Caco-2 (cell line): ENCODE measurements at regions of chr12 and their contacts with region 1.

Region 1: DNA sequence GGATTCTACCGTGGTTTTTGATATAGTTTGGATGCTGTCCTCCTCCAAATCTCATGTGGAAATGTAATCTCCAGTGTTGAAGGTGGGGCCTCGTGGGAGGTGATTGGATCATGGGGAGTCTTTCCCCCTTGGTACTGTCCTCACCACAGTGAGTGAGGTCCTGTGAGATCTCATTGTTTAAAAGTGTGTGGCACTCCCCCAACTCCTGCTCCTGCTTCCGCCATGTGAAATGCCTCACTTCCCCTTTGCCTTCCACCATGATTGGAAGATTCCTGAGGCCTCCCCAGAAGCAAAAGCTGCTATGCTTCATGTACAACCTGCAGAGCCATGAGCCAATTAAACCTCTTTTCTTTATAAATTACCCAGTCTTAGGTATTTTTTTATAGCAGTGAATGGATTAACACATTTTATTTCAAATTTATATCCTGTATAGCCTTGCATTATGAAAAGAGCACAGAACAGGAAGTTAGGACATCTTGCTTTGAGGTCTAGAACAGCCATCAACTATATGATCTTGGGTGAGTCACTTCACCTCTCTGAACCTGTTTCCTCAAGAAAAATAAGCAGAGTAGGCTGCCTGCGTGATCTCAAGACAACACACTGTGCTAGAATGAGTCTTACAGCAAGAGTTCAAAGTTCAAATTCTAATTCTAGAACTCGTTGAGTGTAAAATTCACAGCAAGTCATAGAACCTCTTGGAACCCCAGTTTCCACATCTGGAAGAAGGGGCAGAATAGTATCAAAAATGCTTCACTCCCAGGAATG is 160.9 kb upstream of the EEA1 start:
- DNase-seq: peak; percentile 37 to 67
- H3K4me3 ChIP-seq: no peak overlapping the region
- H3K4me3 Mint-ChIP-seq: no peak overlapping the region
- H3K27ac Mint-ChIP-seq: peak overlapping the region; percentile 98
- H3K4me1 ChIP-seq: peaks cover 67% of the 10 kb centered on the region
- H3K4me1 Mint-ChIP-seq: peaks cover 54% of the 10 kb centered on the region
- H3K27me3 ChIP-seq: no peaks in the 10 kb centered on the region
- H3K27me3 Mint-ChIP-seq: no peaks in the 10 kb centered on the region
- CTCF ChIP-seq: no peak

Region 2: DNA sequence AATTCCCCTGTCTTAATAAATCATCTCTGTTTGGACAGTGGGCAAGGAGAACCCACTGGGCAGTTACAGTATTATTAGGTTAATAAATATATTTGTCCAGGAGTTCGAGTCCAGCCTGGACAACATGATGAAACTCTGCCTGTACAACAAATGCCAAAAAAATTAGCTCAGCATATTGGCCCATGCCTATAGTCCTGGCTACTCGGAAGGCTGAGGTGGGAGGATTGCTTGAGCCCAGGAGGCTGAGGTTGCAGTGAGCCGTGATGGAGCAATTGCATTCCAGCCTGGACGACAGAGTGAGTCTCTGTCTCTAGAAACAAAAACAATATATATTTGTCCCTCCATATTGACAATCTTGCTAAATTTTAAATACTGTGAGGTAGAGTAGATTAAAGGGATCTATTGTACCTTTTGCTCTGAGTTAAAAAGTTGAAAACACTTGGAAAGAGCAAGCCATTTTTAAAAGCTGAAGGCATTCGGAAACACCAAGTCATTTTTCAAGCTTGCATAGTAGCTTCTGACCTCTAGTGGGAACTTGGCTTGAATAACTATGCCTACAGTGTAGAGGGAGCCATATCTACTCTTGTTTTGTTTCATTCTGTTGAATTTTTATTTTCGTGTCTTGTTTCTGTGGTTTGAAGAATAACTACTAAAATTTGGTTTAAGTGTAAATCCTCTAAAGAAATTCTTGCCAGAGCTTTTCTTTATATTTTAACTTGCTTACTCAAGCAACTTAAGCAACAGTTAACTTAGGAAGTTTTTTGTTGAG is 146.3 kb before region 1 on chr12:
- CTCF ChIA-PET with region 1: no interaction called
- POLR2A ChIA-PET with region 1: interaction called, 4 read pairs
- intact Hi-C with region 1: loop called (anchors 2 kb)
- DNase-seq: no peak
- H3K4me3 ChIP-seq: no peak overlapping the region
- H3K4me3 Mint-ChIP-seq: no peak overlapping the region
- H3K27ac Mint-ChIP-seq: peak overlapping the region; percentile 80
- H3K4me1 ChIP-seq: peaks cover 43% of the 10 kb centered on the region
- H3K4me1 Mint-ChIP-seq: peaks cover 16% of the 10 kb centered on the region
- H3K27me3 ChIP-seq: no peaks in the 10 kb centered on the region
- H3K27me3 Mint-ChIP-seq: no peaks in the 10 kb centered on the region
- CTCF ChIP-seq: peak; percentile 12

Region 3: DNA sequence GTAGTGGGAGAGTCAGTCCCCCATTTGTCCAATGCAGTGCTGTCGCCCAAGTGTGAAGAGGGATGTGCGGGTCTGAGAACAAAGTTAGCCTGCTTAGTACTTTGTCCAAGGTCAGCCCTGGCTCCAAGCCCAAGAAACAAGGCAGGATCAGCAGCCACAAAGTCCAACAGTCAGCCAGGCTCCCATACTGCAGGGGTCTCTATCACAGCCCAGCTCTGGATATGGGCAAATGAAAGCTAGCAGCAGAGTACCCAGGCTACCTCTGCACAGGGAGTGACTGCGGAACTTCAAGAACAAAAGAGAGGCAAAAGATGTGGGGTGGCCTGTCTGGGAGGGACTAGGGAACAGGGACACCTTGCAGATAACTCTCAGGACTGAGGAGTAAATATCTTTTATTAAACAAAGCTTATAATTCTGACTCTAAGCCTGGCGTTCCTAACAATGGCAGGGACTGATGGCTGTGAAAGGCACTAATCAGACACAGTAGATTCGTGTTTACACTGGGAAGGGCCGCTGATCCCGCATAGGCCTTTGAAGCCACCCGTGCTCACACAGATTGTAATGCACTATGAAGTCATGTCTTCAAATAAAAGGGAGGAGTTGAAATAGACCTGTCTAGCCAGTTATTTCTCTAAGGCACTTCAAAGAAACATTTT is 69.9 kb before region 1 on chr12:
- CTCF ChIA-PET with region 1: no interaction called
- POLR2A ChIA-PET with region 1: interaction called, 3 read pairs
- intact Hi-C with region 1: loop called (anchors 1 kb)
- DNase-seq: peak; percentile 92 to 96
- H3K4me3 ChIP-seq: no peak overlapping the region
- H3K4me3 Mint-ChIP-seq: peak overlapping the region; percentile 13
- H3K27ac Mint-ChIP-seq: peak overlapping the region; percentile 89
- H3K4me1 ChIP-seq: peaks cover 89% of the 10 kb centered on the region
- H3K4me1 Mint-ChIP-seq: peaks cover 63% of the 10 kb centered on the region
- H3K27me3 ChIP-seq: no peaks in the 10 kb centered on the region
- H3K27me3 Mint-ChIP-seq: no peaks in the 10 kb centered on the region
- CTCF ChIP-seq: no peak

Region 4: GRCh38 chr12:93103154-93103553 is 13.2 kb after region 1 on chr12:
- CTCF ChIA-PET with region 1: no interaction called
- POLR2A ChIA-PET with region 1: interaction called, 3 read pairs
- intact Hi-C with region 1: loop called (anchors 1 kb)
- DNase-seq: no peak
- H3K4me3 ChIP-seq: no peak overlapping the region
- H3K4me3 Mint-ChIP-seq: no peak overlapping the region
- H3K27ac Mint-ChIP-seq: peak overlapping the region; percentile 76
- H3K4me1 ChIP-seq: peaks cover 47% of the 10 kb centered on the region
- H3K4me1 Mint-ChIP-seq: peaks cover 44% of the 10 kb centered on the region
- H3K27me3 ChIP-seq: no peaks in the 10 kb centered on the region
- H3K27me3 Mint-ChIP-seq: no peaks in the 10 kb centered on the region
- CTCF ChIP-seq: no peak

Region 5: GRCh38 chr12:93127582-93128331 is 37.8 kb after region 1 on chr12:
- CTCF ChIA-PET with region 1: no interaction called
- POLR2A ChIA-PET with region 1: no interaction called
- intact Hi-C with region 1: loop called (anchors 1 kb)
- DNase-seq: peak; percentile 89 to 93
- H3K4me3 ChIP-seq: no peak overlapping the region
- H3K4me3 Mint-ChIP-seq: peak overlapping the region; percentile 37
- H3K27ac Mint-ChIP-seq: peak overlapping the region; percentile 94
- H3K4me1 ChIP-seq: peaks cover 36% of the 10 kb centered on the region
- H3K4me1 Mint-ChIP-seq: peaks cover 43% of the 10 kb centered on the region
- H3K27me3 ChIP-seq: no peaks in the 10 kb centered on the region
- H3K27me3 Mint-ChIP-seq: no peaks in the 10 kb centered on the region
- CTCF ChIP-seq: peak; percentile 57 to 65

Region 6: GRCh38 chr12:93311827-93312226 is 221.8 kb after region 1 on chr12:
- CTCF ChIA-PET with region 1: no interaction called
- POLR2A ChIA-PET with region 1: no interaction called
- intact Hi-C with region 1: loop called (anchors 1 kb)
- DNase-seq: no peak
- H3K4me3 ChIP-seq: no peak overlapping the region
- H3K4me3 Mint-ChIP-seq: no peak overlapping the region
- H3K27ac Mint-ChIP-seq: peak overlapping the region; percentile 34
- H3K4me1 ChIP-seq: peaks cover 45% of the 10 kb centered on the region
- H3K4me1 Mint-ChIP-seq: peaks cover 22% of the 10 kb centered on the region
- H3K27me3 ChIP-seq: no peaks in the 10 kb centered on the region
- H3K27me3 Mint-ChIP-seq: no peaks in the 10 kb centered on the region
- CTCF ChIP-seq: no peak